Caco-2 (cell line): ENCODE measurements at regions of chr11 and their contacts with region 1.

Region 1: DNA sequence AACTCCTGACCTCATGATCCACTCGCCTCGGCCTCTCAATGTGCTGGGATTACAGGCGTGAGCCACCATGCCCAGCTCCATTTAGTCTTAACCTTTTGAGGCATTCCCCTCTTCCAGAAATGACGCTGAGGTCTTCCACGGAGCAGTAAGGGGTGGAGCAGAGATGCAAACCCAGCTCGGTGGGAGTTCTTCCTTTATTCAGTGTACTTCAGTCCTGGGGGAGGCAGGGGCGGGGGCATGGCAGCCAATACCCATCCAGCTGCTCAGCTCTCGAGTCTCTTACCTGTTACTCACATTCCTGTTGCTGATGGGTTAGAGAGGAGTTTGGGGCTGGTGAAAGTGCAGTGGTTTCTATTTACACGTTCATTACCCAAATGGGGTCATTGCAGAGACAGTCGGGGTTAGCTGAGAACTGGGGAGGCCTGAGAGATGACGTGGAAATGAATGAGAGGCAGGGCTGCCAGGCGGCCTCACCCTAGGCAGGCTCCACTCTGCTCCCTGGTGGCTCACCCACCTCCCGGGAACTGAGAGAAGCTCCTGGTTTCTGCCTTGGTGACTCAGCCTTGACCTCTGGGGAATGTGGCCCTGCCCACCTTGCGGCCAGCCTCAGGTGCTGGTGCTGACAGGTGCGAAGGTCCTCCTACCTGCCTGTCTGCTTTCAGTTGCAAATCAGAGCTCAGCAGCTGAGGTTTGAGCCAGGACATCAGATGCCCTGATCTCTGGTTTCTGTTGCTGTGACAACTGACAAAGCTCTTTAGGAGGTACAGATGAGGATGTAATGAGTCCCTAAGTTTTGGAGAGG is 13.4 kb upstream of the ST14 start:
- DNase-seq: peak; percentile 98
- H3K4me3 ChIP-seq: no peak overlapping the region
- H3K4me3 Mint-ChIP-seq: peak overlapping the region; percentile 30
- H3K27ac Mint-ChIP-seq: peak overlapping the region; percentile 87
- H3K4me1 ChIP-seq: peaks cover 59% of the 10 kb centered on the region
- H3K4me1 Mint-ChIP-seq: peaks cover 69% of the 10 kb centered on the region
- H3K27me3 ChIP-seq: no peaks in the 10 kb centered on the region
- H3K27me3 Mint-ChIP-seq: no peaks in the 10 kb centered on the region
- CTCF ChIP-seq: peak; percentile 66 to 94

Region 2: GRCh38 chr11:129881570-129882170 is 264.5 kb before region 1 on chr11:
- CTCF ChIA-PET with region 1: interaction called, 12 read pairs
- POLR2A ChIA-PET with region 1: no interaction called
- intact Hi-C with region 1: no loop called
- DNase-seq: peak; percentile 72 to 84
- H3K4me3 ChIP-seq: no peak overlapping the region
- H3K4me3 Mint-ChIP-seq: no peak overlapping the region
- H3K27ac Mint-ChIP-seq: no peak overlapping the region
- H3K4me1 ChIP-seq: no peaks in the 10 kb centered on the region
- H3K4me1 Mint-ChIP-seq: no peaks in the 10 kb centered on the region
- H3K27me3 ChIP-seq: no peaks in the 10 kb centered on the region
- H3K27me3 Mint-ChIP-seq: no peaks in the 10 kb centered on the region
- CTCF ChIP-seq: peak; percentile 94 to 96

Region 3: DNA sequence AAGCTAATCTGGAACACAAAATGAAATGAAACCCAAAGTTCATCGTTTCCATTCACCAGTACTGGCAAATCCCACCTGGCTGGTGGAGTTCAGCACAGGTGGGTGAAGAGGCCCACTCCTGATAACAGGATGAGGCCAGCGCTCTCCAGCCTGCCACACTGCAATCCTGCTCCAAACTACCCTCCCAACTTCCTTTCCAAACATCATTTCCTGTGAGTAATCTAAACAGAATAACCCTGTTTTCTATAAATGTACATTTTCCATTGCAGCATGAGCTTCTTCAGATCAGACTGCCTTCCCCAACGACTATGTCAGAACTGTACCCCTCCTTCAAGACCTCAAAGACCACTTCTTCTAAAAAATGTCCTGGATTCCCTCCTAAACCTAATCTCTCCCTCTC is 234.9 kb before region 1 on chr11:
- CTCF ChIA-PET with region 1: no interaction called
- POLR2A ChIA-PET with region 1: no interaction called
- intact Hi-C with region 1: loop called (anchors 1 kb)
- DNase-seq: no peak
- H3K4me3 ChIP-seq: no peak overlapping the region
- H3K4me3 Mint-ChIP-seq: no peak overlapping the region
- H3K27ac Mint-ChIP-seq: no peak overlapping the region
- H3K4me1 ChIP-seq: peaks cover 5% of the 10 kb centered on the region; the same call in 1 of the 2 replicates
- H3K4me1 Mint-ChIP-seq: peaks cover 6% of the 10 kb centered on the region
- H3K27me3 ChIP-seq: no peaks in the 10 kb centered on the region
- H3K27me3 Mint-ChIP-seq: no peaks in the 10 kb centered on the region
- CTCF ChIP-seq: no peak

Region 4: DNA sequence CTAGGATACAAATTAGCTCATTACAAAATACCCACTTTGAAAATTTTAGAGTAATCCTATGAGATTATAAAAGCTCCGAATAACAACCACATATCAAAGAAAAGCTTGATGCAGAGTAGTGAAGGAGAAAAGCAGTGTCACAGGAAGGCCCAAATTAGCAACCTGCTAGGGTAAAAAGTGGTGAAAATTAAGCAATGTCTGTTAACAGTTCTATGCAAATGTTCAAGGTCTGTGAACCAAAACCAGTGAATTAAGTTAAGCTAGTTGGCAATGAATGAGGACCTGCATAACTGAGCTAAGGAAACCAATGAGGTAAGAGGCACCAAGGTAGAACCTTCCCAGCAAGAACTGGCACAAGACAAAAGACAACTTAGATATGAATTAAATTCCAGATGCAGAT is 173.1 kb before region 1 on chr11:
- CTCF ChIA-PET with region 1: interaction called, 10 read pairs
- POLR2A ChIA-PET with region 1: no interaction called
- intact Hi-C with region 1: no loop called
- DNase-seq: no peak
- H3K4me3 ChIP-seq: no peak overlapping the region
- H3K4me3 Mint-ChIP-seq: no peak overlapping the region
- H3K27ac Mint-ChIP-seq: no peak overlapping the region
- H3K4me1 ChIP-seq: peaks cover 23% of the 10 kb centered on the region
- H3K4me1 Mint-ChIP-seq: peaks cover 34% of the 10 kb centered on the region
- H3K27me3 ChIP-seq: no peaks in the 10 kb centered on the region
- H3K27me3 Mint-ChIP-seq: no peaks in the 10 kb centered on the region
- CTCF ChIP-seq: no peak

Region 5: DNA sequence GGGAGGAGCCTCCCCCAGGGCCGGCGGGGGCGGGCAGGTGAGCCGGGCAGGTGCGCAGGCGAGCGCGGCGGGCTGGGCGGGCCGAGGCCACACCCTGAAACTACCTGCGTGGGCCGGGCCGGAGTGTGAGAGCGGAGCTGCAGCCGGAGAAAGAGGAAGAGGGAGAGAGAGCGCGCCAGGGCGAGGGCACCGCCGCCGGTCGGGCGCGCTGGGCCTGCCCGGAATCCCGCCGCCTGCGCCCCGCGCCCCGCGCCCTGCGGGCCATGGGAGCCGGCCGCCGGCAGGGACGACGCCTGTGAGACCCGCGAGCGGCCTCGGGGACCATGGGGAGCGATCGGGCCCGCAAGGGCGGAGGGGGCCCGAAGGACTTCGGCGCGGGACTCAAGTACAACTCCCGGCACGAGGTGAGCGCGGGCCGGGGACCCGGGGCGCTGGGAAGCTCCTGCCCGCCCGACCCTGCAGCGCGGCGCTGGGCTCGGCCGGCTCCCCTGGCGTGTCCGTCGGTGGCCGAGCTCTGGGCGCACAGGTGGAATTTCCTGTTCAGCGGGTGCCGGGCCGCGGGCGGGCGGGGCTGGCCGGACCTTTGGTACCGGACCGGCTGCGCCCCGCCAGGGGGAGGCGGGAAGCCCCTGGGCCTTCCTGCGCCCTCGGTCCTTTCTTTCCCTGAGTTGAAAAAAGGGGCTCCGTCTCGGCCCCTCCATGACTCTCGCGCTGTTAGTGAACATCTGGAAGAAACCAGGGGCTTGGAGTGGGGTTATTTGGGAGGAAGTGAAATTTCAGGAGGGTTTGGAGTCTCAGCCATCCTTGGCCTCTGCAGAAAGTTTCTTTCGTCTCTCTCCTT is 13.7 kb after region 1 on chr11 and contains the start of gene ST14:
- CTCF ChIA-PET with region 1: interaction called, 34 read pairs
- POLR2A ChIA-PET with region 1: interaction called, 11 read pairs
- intact Hi-C with region 1: loop called (anchors 1 kb)
- DNase-seq: peak; percentile 88 to 92
- H3K4me3 ChIP-seq: peak within 1 kb of the TSS; percentile 52
- H3K4me3 Mint-ChIP-seq: peak within 1 kb of the TSS; percentile 72
- H3K27ac Mint-ChIP-seq: peak within 1 kb of the TSS; percentile 74
- H3K4me1 ChIP-seq: peaks cover 28% of the 10 kb centered on the region
- H3K4me1 Mint-ChIP-seq: peaks cover 37% of the 10 kb centered on the region
- H3K27me3 ChIP-seq: no peaks in the 10 kb centered on the region
- H3K27me3 Mint-ChIP-seq: no peaks in the 10 kb centered on the region
- CTCF ChIP-seq: peak in 1 of 2 experiments; percentile 22
- total RNA-seq, gene ST14: 298 and 304 TPM in 2 replicates

Region 6: DNA sequence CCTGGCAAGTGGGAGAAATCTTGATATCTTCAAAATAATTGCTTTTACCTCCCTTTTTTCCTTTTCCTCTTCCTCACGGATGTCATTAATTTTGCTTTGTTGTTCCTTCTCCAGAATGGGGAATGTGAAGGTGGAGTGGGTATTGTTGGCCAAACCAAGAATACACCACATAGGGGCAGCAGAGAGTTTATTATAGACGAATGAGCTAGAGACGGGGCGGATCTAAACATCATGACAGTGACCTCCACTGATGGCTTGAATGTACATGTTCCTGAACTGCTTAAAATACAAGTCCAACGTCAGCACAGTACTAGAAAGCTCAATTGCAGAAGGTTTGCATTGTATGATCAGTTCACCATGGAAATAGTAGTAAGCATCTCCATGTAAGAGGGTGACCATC is 892.4 kb after region 1 on chr11:
- CTCF ChIA-PET with region 1: no interaction called
- POLR2A ChIA-PET with region 1: no interaction called
- intact Hi-C with region 1: no loop called
- DNase-seq: peak; percentile 45 to 59
- H3K4me3 ChIP-seq: no peak overlapping the region
- H3K4me3 Mint-ChIP-seq: no peak overlapping the region
- H3K27ac Mint-ChIP-seq: no peak overlapping the region
- H3K4me1 ChIP-seq: no peaks in the 10 kb centered on the region; the same call in 1 of the 2 replicates
- H3K4me1 Mint-ChIP-seq: no peaks in the 10 kb centered on the region
- H3K27me3 ChIP-seq: no peaks in the 10 kb centered on the region
- H3K27me3 Mint-ChIP-seq: peaks cover 10% of the 10 kb centered on the region
- CTCF ChIP-seq: peak; percentile 33 to 58